ENCODE measurements at regions of chr1 and their contacts with region 1.

Region 1: GRCh38 chr1:212186427-212187207 is 98.6 kb upstream of the PPP2R5A start:
- DNase-seq: no peak
- H3K4me3 ChIP-seq: no peak overlapping the region
- H3K4me3 Mint-ChIP-seq: no peak overlapping the region
- H3K27ac Mint-ChIP-seq: no peak overlapping the region
- H3K4me1 ChIP-seq: no peaks in the 10 kb centered on the region
- H3K4me1 Mint-ChIP-seq: no peaks in the 10 kb centered on the region
- H3K27me3 ChIP-seq: no peaks in the 10 kb centered on the region
- H3K27me3 Mint-ChIP-seq: no peaks in the 10 kb centered on the region
- CTCF ChIP-seq: no peak

Region 2: GRCh38 chr1:212161231-212161781 is 25.3 kb before region 1 on chr1:
- CTCF ChIA-PET with region 1: no interaction called
- POLR2A ChIA-PET with region 1: no interaction called
- intact Hi-C with region 1: loop called (anchors 1 kb)
- DNase-seq: no peak
- H3K4me3 ChIP-seq: no peak overlapping the region
- H3K4me3 Mint-ChIP-seq: no peak overlapping the region
- H3K27ac Mint-ChIP-seq: no peak overlapping the region
- H3K4me1 ChIP-seq: no peaks in the 10 kb centered on the region
- H3K4me1 Mint-ChIP-seq: no peaks in the 10 kb centered on the region
- H3K27me3 ChIP-seq: no peaks in the 10 kb centered on the region
- H3K27me3 Mint-ChIP-seq: no peaks in the 10 kb centered on the region
- CTCF ChIP-seq: no peak

Measured in Caco-2 (cell line).